Endothelial cell of umbilical vein (primary cell): ENCODE measurements at regions of chr17 and their contacts with region 1.

Region 1: DNA sequence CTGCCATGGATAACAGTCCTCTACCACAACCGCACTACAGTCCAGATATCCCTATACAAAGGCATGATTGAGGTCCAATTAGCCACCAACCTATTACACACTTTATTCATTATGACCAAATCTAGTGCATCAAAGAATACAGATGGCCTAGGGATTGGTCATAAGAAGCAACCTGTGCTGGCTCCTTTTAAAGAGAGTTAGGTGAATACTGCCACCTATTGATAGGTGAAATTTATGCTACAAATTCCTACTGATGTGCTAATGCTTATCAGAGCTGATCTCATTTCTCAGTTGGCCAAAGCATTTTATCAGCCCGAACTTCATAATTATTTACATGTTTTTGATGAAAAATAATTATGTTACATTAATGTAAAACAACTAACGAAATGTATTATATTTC is 166.2 kb downstream of the ANKFN1 start:
- DNase-seq: peak; percentile 64
- H3K4me3 ChIP-seq: no peak overlapping the region
- H3K27ac ChIP-seq: no peak overlapping the region
- H3K4me1 ChIP-seq: peaks cover 17% of the 10 kb centered on the region
- H3K27me3 ChIP-seq: peaks cover 23 to 35% of the 10 kb centered on the region in 2 experiments
- CTCF ChIP-seq: peak; percentile 40 to 52
- POLR2A ChIP-seq: no peak

Region 2: GRCh38 chr17:55527540-55528118 is 791.9 kb before region 1 on chr17:
- CTCF ChIA-PET with region 1: interaction called, 4 read pairs
- POLR2A ChIA-PET with region 1: no interaction called
- dilution Hi-C with region 1: no loop called
- intact Hi-C with region 1: loop called (anchors 1 kb)
- DNase-seq: peak; percentile 71
- H3K4me3 ChIP-seq: no peak overlapping the region
- H3K27ac ChIP-seq: no peak overlapping the region
- H3K4me1 ChIP-seq: no peaks in the 10 kb centered on the region
- H3K27me3 ChIP-seq: peaks cover 0 to 3% of the 10 kb centered on the region in 2 experiments
- CTCF ChIP-seq: peak; percentile 48 to 69
- POLR2A ChIP-seq: no peak

Region 3: DNA sequence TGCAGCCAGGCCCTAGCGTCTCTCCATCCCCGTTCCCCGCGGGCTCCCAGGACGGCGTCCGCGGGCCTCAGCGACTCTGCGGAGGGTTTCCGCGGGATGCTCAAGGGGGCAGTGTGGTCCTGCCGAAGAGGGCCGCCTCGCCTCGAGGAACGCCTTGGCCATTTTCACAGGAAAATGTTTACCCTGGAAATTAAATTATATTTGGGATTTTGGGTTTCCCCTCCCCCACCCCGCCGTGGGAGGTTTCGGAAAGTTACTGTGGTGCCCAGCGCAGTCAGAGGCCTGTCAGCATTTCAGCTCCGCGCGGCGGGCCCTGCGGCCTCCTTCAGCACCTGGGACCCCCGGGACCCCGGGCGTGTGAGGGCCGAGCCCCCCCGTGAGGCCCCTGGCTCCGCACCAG is 474.1 kb before region 1 on chr17:
- CTCF ChIA-PET with region 1: interaction called, 7 read pairs
- POLR2A ChIA-PET with region 1: no interaction called
- dilution Hi-C with region 1: no loop called
- intact Hi-C with region 1: loop called (anchors 2 kb)
- DNase-seq: peak; percentile 26
- H3K4me3 ChIP-seq: no peak overlapping the region
- H3K27ac ChIP-seq: no peak overlapping the region
- H3K4me1 ChIP-seq: peaks cover 3% of the 10 kb centered on the region
- H3K27me3 ChIP-seq: peaks cover 0 to 4% of the 10 kb centered on the region in 2 experiments
- CTCF ChIP-seq: peak; percentile 63 to 64
- POLR2A ChIP-seq: no peak

Region 4: GRCh38 chr17:56136301-56136700 is 183.2 kb before region 1 on chr17:
- CTCF ChIA-PET with region 1: interaction called, 18 read pairs
- POLR2A ChIA-PET with region 1: no interaction called
- dilution Hi-C with region 1: no loop called
- intact Hi-C with region 1: no loop called
- DNase-seq: no peak
- H3K4me3 ChIP-seq: no peak overlapping the region
- H3K27ac ChIP-seq: no peak overlapping the region
- H3K4me1 ChIP-seq: no peaks in the 10 kb centered on the region
- H3K27me3 ChIP-seq: peaks cover 3% of the 10 kb centered on the region in 2 experiments
- CTCF ChIP-seq: no peak
- POLR2A ChIP-seq: no peak

Region 5: DNA sequence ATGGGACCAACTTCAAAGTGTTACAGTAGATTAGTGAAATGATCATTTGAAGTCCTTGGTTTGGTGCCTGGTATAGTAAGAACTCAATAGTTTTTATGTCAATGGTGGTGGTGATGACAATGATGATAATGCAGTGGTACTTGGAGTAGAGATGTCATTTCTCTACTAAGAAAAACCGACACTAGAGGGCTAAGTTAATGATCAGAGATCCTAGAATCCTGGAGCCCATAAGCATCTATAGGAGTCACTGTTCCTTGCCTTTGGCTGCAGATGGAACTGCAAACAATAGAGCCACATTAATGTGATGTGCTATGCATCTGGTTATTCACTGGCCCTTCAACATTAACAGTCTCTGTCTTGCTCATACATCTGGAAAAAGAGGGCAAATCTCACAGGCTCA is 62.4 kb before region 1 on chr17:
- CTCF ChIA-PET with region 1: no interaction called
- POLR2A ChIA-PET with region 1: no interaction called
- dilution Hi-C with region 1: no loop called
- intact Hi-C with region 1: loop called (anchors 10 kb)
- DNase-seq: no peak
- H3K4me3 ChIP-seq: no peak overlapping the region
- H3K27ac ChIP-seq: no peak overlapping the region
- H3K4me1 ChIP-seq: no peaks in the 10 kb centered on the region
- H3K27me3 ChIP-seq: peaks cover 0 to 3% of the 10 kb centered on the region in 2 experiments
- CTCF ChIP-seq: no peak
- POLR2A ChIP-seq: no peak

Region 6: DNA sequence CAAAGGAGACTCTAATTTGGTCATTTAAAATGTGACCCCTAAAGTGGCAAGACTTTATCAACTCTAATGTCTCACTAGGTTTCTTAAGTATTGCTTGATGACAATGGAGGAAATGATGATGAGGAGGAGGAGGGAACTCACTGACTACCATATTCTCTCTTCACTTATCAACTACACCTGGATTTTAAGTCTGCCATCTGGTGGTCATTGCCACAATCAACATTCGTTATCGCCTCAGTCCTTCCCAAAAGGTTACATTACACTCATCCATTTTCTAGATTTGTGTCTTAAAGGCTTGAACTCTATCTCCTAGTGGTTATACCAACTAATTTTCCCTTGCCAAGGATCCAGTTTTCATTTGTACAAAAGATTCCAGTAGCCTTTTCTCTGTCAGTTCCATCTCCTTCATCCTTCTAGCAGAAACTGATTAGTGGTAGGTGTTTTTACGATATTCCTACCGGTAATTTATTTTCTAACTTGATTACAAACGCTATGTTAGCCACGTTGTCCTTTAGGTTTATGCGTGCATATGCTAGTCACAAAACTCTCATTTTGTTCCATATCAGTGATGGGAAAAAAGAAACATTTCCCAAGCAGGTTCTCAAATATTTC is 159.4 kb after region 1 on chr17:
- CTCF ChIA-PET with region 1: interaction called, 11 read pairs
- POLR2A ChIA-PET with region 1: no interaction called
- dilution Hi-C with region 1: no loop called
- intact Hi-C with region 1: loop called (anchors 2 kb)
- DNase-seq: peak; percentile 44
- H3K4me3 ChIP-seq: no peak overlapping the region
- H3K27ac ChIP-seq: no peak overlapping the region
- H3K4me1 ChIP-seq: no peaks in the 10 kb centered on the region
- H3K27me3 ChIP-seq: peaks cover 0 to 7% of the 10 kb centered on the region in 2 experiments
- CTCF ChIP-seq: peak; percentile 30 to 52
- POLR2A ChIP-seq: no peak